Calu3 (cell line): ENCODE measurements at regions of chr15 and their contacts with region 1.

Region 1: DNA sequence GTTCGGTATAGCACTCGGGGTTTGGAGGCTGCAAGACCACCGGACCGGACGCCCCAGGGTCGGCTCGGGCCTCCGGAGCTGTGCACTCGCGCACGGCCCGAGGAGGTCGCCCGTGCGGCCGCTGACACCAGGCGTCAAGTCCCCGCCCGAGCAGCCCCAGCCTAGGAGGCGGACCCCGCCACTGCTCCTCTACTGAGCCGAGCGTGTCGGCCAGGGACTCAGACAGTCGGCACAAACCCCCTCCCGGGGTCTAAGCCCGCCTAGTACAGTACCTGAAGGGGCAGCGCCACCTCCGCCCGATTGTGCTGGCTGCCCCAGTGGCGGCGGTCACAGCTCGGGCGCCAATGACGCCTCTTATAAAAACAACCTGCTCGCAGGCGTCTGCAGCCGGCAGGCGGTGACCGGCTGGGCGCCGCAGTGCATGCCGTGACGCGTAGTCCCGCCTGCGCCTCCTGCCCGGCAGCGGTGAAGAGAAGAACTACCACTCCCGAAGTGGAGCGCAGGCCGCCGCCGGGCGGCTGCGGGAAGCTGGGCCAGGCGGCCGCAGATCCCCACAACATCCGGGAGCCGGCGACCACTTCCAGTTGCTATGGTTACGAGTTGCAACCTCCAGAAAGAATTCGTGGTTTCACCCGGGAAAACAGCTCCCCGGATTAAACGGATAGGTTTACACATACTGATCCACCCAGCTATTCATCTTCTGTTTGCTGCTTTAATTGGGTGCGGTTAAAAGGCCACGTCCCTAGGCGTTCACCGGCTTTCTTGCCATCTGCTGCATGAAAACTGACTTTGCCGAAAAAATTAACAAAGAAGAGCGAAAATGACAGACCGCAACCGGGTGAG is at the starts of genes CCPG1 and PIERCE2:
- DNase-seq: peak; percentile 97
- H3K4me3 Mint-ChIP-seq: peak within 1 kb of the TSS; percentile 81
- H3K27ac Mint-ChIP-seq: peak within 1 kb of the TSS; percentile 75
- H3K4me1 Mint-ChIP-seq: peaks cover 13% of the 10 kb centered on the region
- H3K27me3 Mint-ChIP-seq: no peaks in the 10 kb centered on the region
- CTCF ChIP-seq: peak; percentile 94
- total RNA-seq, gene CCPG1: 54.5 and 54.6 TPM in 2 replicates
- total RNA-seq, gene PIERCE2: 2.9 and 3.1 TPM in 2 replicates

Region 2: DNA sequence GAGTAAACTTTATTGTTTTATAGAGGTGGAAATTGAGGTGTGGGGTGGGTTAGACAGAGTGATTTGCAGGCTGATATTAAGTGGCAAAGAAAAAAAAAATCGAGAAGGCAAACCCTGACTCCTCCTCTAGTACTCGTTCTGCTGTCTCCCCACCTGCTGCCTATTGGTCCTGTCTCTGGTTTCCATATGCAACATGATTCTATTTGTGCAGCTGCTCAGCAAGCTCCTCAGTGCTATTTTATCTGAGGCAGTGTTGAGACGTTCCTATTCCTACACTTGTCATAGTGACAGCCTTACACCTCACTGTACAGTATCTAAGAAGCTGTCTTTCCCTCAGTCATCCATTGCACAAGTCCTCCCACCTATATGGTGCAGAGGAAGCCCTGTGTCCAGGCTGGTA is 256.5 kb before region 1 on chr15:
- CTCF ChIA-PET with region 1: no interaction called
- intact Hi-C with region 1: no loop called
- DNase-seq: no peak
- H3K4me3 Mint-ChIP-seq: no peak overlapping the region
- H3K27ac Mint-ChIP-seq: no peak overlapping the region
- H3K4me1 Mint-ChIP-seq: no peaks in the 10 kb centered on the region
- H3K27me3 Mint-ChIP-seq: peaks cover 15% of the 10 kb centered on the region
- CTCF ChIP-seq: no peak

Region 3: DNA sequence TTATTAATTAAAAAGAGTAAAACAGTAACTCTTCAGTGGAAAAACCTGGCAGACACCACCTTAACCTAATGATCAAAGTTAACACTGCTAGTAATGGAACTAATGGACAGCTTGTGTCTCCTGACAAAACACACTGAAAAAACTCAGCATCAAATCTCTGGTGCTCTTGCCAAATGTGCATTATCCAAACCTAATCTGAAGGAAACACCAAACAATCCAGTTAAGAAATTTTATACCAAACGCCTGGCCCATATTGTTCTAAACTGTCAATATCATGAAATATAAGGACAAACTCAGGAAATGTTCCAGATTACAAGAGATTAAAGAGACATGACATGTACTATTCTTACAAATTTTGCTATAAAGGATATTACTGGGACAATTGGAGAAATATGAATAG is 221.8 kb before region 1 on chr15:
- CTCF ChIA-PET with region 1: no interaction called
- intact Hi-C with region 1: no loop called
- DNase-seq: no peak
- H3K4me3 Mint-ChIP-seq: no peak overlapping the region
- H3K27ac Mint-ChIP-seq: no peak overlapping the region
- H3K4me1 Mint-ChIP-seq: peaks cover 32% of the 10 kb centered on the region
- H3K27me3 Mint-ChIP-seq: no peaks in the 10 kb centered on the region
- CTCF ChIP-seq: no peak

Region 4: GRCh38 chr15:55196458-55197361 is 211.5 kb before region 1 on chr15 and contains the start of gene RSL24D1:
- CTCF ChIA-PET with region 1: interaction called, 3 read pairs
- intact Hi-C with region 1: loop called (anchors 5 kb)
- DNase-seq: peak; percentile 96
- H3K4me3 Mint-ChIP-seq: no peak within 1 kb of the TSS
- H3K27ac Mint-ChIP-seq: no peak within 1 kb of the TSS
- H3K4me1 Mint-ChIP-seq: no peaks in the 10 kb centered on the region
- H3K27me3 Mint-ChIP-seq: no peaks in the 10 kb centered on the region
- CTCF ChIP-seq: no peak
- total RNA-seq, gene RSL24D1: 82.1 and 93.3 TPM in 2 replicates

Region 5: DNA sequence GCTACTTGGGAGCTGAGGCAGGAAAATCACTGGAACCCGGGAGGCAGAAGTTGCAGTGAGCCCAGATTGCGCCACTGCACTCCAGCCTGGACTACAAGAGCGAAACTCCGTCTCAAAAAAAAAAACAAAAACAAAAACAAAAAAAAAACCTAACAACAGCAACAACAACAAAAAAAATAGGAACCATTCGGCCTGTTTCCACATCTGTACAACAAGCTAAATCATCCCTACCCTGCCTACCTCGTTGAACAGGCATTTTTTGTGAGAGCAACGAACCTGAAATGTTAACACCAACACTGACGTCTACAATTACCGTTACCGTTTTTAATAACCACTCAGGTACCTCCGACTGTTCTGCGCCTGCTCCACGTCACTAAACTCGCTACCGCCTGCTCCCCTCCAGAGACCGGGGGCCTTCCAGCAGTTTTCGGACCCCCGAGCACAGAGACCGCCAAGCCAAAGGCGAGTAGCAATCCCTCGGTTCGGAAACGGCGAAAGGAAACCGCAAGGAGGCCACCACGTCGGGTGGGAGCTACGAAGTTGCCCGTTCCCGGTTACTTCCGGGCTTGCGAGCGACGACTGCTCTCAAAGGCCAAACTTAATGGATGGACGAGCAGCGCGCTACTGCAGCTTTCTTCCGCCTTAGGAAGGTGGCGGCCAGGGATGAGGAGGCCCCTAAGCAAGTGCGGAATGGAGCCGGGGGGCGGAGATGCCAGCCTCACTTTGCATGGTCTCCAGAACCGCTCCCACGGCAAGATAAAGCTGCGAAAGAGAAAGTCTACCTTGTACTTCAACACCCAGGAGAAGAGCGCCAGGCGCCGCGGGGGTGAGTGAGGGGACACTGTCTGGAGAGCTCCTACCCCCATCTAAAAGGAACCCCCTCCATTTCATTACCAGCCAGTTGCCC is 89.3 kb before region 1 on chr15 and contains the starts of genes PIGB and PIGBOS1:
- CTCF ChIA-PET with region 1: interaction called, 14 read pairs
- intact Hi-C with region 1: loop called (anchors 1 kb)
- DNase-seq: peak; percentile 85
- H3K4me3 Mint-ChIP-seq: peak within 1 kb of the TSS; percentile 98
- H3K27ac Mint-ChIP-seq: peak within 1 kb of the TSS; percentile 99
- H3K4me1 Mint-ChIP-seq: peaks cover 17% of the 10 kb centered on the region
- H3K27me3 Mint-ChIP-seq: no peaks in the 10 kb centered on the region
- CTCF ChIP-seq: no peak
- total RNA-seq, gene PIGB: 17.5 and 23.5 TPM in 2 replicates
- total RNA-seq, gene PIGBOS1: 16.6 and 17.1 TPM in 2 replicates

Region 6: GRCh38 chr15:55846116-55846707 is 438.0 kb after region 1 on chr15:
- CTCF ChIA-PET with region 1: no interaction called
- intact Hi-C with region 1: no loop called
- DNase-seq: peak; percentile 77
- H3K4me3 Mint-ChIP-seq: no peak overlapping the region
- H3K27ac Mint-ChIP-seq: no peak overlapping the region
- H3K4me1 Mint-ChIP-seq: no peaks in the 10 kb centered on the region
- H3K27me3 Mint-ChIP-seq: no peaks in the 10 kb centered on the region
- CTCF ChIP-seq: peak; percentile 82

Region 7: GRCh38 chr15:55868707-55869106 is 460.5 kb after region 1 on chr15:
- CTCF ChIA-PET with region 1: no interaction called
- intact Hi-C with region 1: no loop called
- DNase-seq: no peak
- H3K4me3 Mint-ChIP-seq: no peak overlapping the region
- H3K27ac Mint-ChIP-seq: no peak overlapping the region
- H3K4me1 Mint-ChIP-seq: peaks cover 20% of the 10 kb centered on the region
- H3K27me3 Mint-ChIP-seq: no peaks in the 10 kb centered on the region
- CTCF ChIP-seq: no peak